OCI-LY7 (cell line): ENCODE measurements at regions of chr3 and their contacts with region 1.

Region 1: GRCh38 chr3:143276592-143276991 is 157.0 kb downstream of the CHST2 start:
- DNase-seq: no peak
- H3K4me3 ChIP-seq: no peak overlapping the region
- H3K27ac ChIP-seq: no peak overlapping the region
- H3K4me1 ChIP-seq: no peaks in the 10 kb centered on the region
- CTCF ChIP-seq: no peak

Region 2: DNA sequence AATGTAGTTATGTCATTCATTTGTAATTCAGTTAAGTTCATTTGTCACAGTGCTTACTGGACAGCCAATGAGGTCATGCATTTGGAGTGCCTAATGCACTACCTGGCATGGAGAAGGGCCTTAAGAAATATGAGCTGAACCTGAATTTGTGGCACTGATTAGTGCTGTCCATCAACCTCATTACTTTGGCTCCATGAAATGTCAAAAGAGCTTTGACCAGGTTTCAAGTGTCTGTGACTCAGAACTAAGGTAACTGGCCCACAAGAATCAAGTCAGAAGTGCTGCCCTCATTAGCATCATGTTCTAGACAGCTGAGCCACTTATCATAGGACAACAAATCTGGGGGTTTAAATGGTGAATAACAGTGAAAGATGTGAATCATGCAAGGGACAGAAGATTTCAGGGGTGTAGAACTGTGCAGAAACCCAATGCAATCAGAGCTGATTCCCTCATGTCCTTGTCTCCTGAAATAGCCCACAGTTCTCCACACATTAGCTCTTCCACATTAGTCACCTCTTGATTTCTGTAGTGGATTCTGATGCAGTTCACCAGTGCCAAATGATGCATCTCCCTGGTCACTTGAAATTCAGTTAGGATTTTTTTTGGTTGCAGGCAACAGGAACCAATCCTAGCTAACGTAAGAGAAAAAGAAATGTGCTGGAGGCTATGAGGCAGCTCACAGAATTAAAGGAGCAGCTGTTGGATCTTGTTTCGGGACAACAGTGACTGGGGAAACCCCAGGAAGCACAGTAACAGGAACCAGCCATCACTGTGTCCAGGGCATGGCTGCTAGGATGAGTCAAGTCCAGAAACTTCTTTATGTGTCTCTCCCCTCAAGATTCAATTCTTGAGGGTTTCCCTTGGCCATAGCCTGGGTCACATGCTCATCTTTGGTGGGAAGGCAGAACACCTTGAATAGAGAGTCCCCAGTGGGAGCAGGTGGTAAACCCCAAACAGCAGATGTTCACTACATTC is 118.3 kb before region 1 on chr3:
- CTCF ChIA-PET with region 1: no interaction called
- POLR2A ChIA-PET with region 1: no interaction called
- intact Hi-C with region 1: no loop called
- DNase-seq: no peak
- H3K4me3 ChIP-seq: no peak overlapping the region
- H3K27ac ChIP-seq: no peak overlapping the region
- H3K4me1 ChIP-seq: no peaks in the 10 kb centered on the region
- CTCF ChIP-seq: no peak

Region 3: DNA sequence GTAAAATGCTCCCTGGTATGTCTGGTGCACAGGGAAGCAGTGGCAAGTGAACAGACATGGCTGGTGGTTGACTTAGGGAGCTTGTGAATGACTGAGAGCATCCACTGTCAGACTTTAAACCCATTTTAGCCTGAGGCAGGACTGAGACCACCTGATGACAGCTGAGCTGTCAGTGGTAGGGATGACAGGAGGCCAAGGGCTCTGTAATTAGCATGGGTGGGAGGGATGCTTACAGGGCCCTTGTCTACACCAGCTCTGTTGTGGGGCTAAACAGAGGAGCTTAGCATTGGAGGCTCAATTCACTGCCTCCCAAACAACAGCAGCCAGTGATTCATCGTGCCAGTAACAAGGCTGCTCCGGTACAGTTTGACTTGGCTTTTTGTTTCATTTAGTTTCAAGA is 12.4 kb after region 1 on chr3:
- CTCF ChIA-PET with region 1: no interaction called
- POLR2A ChIA-PET with region 1: interaction called, 10 read pairs
- intact Hi-C with region 1: no loop called
- DNase-seq: no peak
- H3K4me3 ChIP-seq: no peak overlapping the region
- H3K27ac ChIP-seq: no peak overlapping the region
- H3K4me1 ChIP-seq: no peaks in the 10 kb centered on the region
- CTCF ChIP-seq: no peak